Activated B cell treated with CpG ODN at 0.5 μM for 24 hours (primary cell): ENCODE measurements at regions of chr19 and their contacts with region 1.

Region 1: DNA sequence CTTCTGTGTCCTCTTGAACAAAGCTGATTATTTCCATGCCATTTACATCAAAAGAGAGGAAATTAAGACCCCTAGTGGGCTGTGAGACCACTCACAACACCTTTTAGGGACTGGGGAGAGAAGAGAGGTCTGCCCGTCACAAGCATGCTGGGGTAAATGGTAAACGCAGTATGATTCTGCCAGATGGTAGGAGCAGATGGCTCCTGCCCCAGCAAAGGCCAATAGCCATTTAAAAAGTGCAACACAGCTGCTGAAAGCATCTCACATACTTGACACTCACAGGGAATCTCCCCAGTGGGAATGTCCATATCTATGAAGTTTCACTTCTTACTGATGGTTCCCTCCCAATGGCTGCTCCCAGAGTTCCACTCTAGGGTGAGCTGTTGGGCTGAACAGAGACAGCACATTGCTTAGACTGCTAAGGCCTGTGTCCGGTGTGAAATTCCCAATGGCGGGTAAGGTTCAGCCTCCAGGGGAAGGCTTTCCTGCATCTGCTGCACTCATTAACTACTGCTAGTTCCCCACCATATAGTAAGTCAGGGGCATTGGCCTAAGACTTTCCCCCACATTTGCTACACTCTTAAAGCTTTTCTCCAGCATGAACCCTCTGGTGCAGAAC is 7.4 kb downstream of the ZNF671 start:
- DNase-seq: no peak
- ATAC-seq: no peak
- H3K4me3 Mint-ChIP-seq: no peak overlapping the region
- H3K27ac Mint-ChIP-seq: no peak overlapping the region
- H3K4me1 Mint-ChIP-seq: peaks cover 11% of the 10 kb centered on the region
- H3K27me3 Mint-ChIP-seq: no peaks in the 10 kb centered on the region
- CTCF ChIP-seq: no peak

Region 2: DNA sequence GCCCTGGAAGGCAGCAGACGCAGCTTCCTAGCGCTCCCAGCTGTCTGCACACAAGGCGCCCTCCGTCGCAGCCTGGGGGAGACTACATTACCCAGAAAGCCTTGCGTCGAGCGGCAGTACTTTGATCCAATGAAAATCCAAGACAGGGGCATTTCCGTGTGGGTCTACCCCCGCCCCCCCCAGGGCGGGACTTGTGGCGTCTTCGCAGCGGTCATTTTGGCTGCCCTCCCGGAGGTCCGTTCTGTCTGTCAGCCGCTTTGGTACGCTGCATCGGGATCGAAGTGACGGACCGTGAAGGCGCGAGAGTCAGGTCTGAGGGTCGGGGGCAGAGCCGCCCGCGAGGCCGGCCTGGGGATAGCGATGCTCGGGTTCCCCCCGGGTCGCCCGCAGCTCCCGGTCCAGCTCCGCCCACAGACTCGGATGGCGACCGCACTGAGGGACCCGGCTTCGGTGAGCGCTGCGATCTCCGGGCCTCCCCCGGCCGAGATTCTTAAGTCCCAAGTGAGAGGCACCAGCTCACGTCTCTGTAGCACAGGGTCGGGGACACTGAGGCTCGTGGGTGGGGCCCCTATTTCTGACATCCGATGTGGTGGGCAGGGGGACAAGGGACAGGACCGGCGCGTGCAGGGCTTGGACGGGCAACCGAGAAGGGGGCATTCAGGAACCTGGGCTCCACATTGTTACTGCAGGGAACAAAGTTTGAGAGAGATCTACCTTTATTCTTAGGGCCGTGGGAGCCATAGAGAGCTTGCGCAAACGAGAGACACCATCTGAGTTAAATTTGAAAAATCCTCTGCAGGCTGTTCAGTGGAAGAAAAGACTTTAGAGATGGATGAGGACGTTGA is 86.8 kb before region 1 on chr19 and contains the start of gene ZNF211:
- CTCF ChIA-PET with region 1: no interaction called
- POLR2A ChIA-PET with region 1: no interaction called
- intact Hi-C with region 1: loop called (anchors 5 kb)
- DNase-seq: peak; percentile 81
- ATAC-seq: peak; percentile 100
- H3K4me3 Mint-ChIP-seq: peak within 1 kb of the TSS; percentile 94
- H3K27ac Mint-ChIP-seq: peak within 1 kb of the TSS; percentile 87
- H3K4me1 Mint-ChIP-seq: peaks cover 19% of the 10 kb centered on the region
- H3K27me3 Mint-ChIP-seq: no peaks in the 10 kb centered on the region
- CTCF ChIP-seq: no peak
- total RNA-seq, gene ZNF211: 22.0 and 26.0 TPM in 2 replicates

Region 3: DNA sequence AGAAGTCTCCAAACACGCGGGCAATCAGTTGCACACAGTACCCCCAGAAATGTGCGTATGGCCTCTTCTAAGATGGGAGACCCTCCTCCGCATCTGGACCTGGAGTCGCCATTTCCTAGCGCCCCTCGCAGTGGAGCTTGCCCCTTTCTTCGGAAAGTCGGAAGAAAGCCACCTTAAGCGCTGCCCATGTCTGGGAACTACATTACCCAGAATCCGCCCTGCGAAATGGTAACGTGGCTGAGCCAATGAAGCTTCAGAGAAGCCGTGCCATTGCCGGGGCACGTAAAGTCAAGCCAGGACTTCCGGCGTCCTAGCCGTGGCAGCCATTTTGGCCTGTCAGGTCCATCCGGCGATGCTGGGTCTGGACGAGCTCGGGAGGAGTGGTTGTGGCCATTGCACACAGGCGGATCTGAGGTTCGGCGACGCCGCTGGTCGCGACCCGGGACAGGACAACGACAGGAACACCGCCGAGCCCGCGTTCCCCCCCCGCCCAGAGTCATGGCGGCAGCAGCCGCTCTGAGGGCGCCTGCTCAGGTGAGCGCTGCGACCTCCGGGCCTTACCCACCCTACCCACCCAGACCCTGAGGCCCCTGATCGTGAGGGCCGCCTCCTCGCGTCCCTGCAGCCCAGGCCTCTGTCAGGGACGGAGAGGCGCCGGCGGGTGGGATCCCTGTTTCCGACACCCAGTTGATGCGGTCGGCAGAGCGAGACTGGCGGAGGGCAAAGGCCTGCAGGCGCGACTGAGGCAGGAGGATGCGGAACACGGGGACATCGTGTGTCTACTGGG is 49.5 kb after region 1 on chr19 and contains the start of gene ZNF586:
- CTCF ChIA-PET with region 1: no interaction called
- POLR2A ChIA-PET with region 1: no interaction called
- intact Hi-C with region 1: no loop called
- DNase-seq: peak; percentile 76
- ATAC-seq: peak; percentile 98
- H3K4me3 Mint-ChIP-seq: peak within 1 kb of the TSS; percentile 95
- H3K27ac Mint-ChIP-seq: peak within 1 kb of the TSS; percentile 86
- H3K4me1 Mint-ChIP-seq: peaks cover 54% of the 10 kb centered on the region
- H3K27me3 Mint-ChIP-seq: no peaks in the 10 kb centered on the region
- CTCF ChIP-seq: no peak
- total RNA-seq, gene ZNF586: 29.4 and 33.7 TPM in 2 replicates

Region 4: GRCh38 chr19:57934820-57935665 is 215.0 kb after region 1 on chr19 and contains the start of gene ZNF418:
- CTCF ChIA-PET with region 1: no interaction called
- POLR2A ChIA-PET with region 1: no interaction called
- intact Hi-C with region 1: no loop called
- DNase-seq: peak; percentile 40
- ATAC-seq: peak; percentile 99
- H3K4me3 Mint-ChIP-seq: peak within 1 kb of the TSS; percentile 96
- H3K27ac Mint-ChIP-seq: peak within 1 kb of the TSS; percentile 86
- H3K4me1 Mint-ChIP-seq: peaks cover 16% of the 10 kb centered on the region
- H3K27me3 Mint-ChIP-seq: no peaks in the 10 kb centered on the region
- CTCF ChIP-seq: no peak
- total RNA-seq, gene ZNF418: 21.3 and 26.5 TPM in 2 replicates

Region 5: DNA sequence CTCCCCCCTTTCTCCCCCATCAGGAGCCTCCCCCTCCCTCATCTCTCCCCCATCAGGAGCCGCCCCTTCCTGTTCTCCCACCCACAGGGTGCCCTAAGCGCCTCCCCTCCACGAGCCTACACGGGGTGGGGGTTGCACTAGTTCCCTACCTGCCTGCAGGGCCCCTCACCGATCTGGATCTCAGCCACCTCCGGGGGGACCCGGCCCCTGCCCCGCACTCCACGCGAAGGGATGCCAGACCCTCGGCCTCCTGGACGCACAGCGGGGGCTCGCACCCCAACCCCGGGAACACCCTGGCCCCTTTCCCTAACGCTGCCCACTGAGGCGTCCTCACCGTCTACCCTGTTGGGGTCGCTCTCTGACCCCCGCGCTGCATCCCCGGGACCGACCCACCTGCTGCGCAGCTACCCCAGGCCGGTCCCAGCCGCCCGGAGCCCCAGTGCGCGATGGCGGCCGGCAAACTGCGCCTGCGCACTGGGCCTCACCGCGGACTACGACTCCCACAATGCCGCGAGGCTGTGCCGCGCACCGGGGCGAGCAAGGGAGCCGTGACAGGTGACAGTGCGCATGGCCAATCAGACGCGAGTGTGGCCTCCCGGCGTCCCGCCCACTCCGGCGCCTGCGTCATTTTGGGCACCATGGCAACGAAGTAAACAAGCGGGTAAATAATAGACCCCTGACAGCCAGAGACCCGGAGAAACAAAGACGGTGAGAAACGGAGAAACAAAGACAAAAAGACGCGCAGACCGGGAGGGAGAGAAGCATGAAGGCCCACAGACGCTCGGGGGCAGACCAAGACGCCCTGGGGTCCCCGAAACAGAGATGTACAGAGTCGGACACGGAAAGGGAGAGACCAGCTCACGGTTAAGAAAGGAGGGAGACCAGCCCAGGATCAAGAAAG is 378.0 kb after region 1 on chr19 and contains the start of gene ZSCAN18:
- CTCF ChIA-PET with region 1: no interaction called
- POLR2A ChIA-PET with region 1: no interaction called
- intact Hi-C with region 1: loop called (anchors 5 kb)
- DNase-seq: peak; percentile 98
- ATAC-seq: peak; percentile 93
- H3K4me3 Mint-ChIP-seq: peak within 1 kb of the TSS; percentile 90
- H3K27ac Mint-ChIP-seq: peak within 1 kb of the TSS; percentile 100
- H3K4me1 Mint-ChIP-seq: peaks cover 18% of the 10 kb centered on the region
- H3K27me3 Mint-ChIP-seq: no peaks in the 10 kb centered on the region
- CTCF ChIP-seq: no peak
- total RNA-seq, gene ZSCAN18: 40.8 and 49.8 TPM in 2 replicates